Right ventricle myocardium inferior (tissue), 1 donor: ENCODE measurements at regions of chr13 and their contacts with region 1.

Region 1: GRCh38 chr13:76886292-76887075 is at the start of gene KCTD12:
- DNase-seq: peak; percentile 97
- ATAC-seq: peak; percentile 90
- total RNA-seq, gene KCTD12: 42.8 TPM

Region 2: GRCh38 chr13:75870397-75870903 is 1016.0 kb before region 1 on chr13:
- intact Hi-C with region 1: loop called (anchors 5 kb)
- DNase-seq: no peak
- ATAC-seq: no peak

Region 3: GRCh38 chr13:76210262-76210661 is 676.2 kb before region 1 on chr13:
- intact Hi-C with region 1: no loop called
- DNase-seq: peak; percentile 43
- ATAC-seq: no peak

Region 4: DNA sequence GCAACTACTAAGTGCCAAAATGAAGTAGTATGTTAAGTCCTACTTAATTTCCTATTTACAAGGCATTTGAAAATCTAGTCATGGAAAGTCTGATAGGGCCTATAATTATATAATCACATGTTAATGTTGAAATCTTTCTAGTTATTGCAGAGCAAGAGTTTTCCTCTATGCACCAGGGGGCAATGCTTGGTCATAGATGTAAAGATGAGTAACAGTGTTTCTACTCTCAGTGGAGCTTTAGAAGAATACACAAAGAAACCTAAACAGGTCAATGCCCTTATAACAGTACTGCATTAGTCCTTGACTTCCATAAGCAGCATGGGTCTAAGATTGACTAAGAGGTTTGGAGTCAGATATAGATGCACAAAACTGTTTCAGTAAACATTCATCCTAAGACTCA is 218.9 kb before region 1 on chr13:
- intact Hi-C with region 1: loop called (anchors 5 kb)
- DNase-seq: no peak
- ATAC-seq: peak; percentile 51

Region 5: GRCh38 chr13:76764429-76764828 is 122.1 kb before region 1 on chr13:
- intact Hi-C with region 1: loop called (anchors 10 kb)
- DNase-seq: peak; percentile 72
- ATAC-seq: peak; percentile 92

Region 6: DNA sequence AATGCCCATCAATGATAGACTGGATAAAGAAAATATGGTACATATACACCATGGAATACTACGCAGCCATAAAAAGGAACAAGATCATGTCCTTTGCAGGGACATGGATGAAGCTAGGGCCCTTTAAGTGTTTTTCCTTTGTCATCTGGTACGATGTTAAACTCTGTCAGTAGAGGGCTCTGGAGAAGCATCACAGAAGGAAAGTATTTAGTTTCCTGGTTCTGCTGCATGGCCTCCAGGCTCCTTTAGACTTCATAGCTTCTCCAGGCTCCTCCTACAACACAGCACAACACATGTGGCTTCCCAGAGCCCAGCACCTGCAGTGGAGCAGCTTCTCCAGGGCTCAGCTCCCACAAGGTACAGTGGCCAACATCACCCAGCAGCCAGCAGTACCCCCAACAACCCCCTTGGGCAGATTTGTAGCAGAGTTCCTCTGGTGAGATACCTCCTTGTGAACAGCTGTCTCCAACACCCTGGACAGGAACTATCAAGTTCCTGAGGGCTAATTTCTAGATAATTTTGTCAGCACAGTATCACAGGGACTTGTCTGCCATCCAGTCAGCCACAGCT is 63.7 kb before region 1 on chr13:
- intact Hi-C with region 1: loop called (anchors 2 kb)
- DNase-seq: no peak
- ATAC-seq: peak; percentile 23

Region 7: DNA sequence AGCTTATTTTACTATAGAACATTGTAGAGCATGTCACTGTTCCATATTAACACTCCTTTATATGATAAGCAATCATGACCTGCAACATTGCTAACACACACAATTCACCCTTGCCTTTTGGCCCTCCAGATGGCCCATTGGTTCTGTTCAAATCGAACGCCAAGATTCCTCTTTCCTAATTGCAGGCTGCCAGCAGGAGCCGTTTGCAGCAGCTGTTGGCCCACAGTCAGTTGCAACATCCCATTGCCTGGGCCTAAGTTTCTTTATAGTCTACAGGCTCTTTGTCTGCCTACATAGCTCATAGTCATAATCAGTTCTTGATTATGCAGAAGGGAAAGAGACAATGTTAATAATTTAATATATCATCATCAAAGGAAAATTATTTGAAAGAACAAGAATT is 37.9 kb before region 1 on chr13:
- intact Hi-C with region 1: no loop called
- DNase-seq: no peak
- ATAC-seq: peak; percentile 83